GM12878 (cell line): ENCODE measurements at regions of chr2 and their contacts with region 1.

Region 1: DNA sequence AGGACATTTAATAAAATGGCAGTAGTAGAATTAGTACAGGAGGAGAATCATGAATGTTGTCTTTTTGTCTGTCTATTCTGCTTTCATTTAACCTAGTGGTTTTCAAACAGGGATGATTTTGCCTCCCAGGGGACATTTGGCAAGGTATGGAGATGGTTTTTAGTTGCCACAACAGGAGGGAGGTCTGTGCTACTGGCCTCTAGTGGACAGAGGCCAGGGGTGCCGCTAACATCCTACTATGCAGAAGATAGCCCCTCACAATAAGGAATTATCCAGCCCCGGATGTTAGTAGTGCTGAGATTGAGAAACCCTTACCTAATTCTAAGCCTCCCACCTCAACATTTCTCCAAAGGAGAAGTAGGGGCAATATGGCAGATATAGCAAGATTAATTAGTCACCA is 18.3 kb downstream of the FASTKD2 start:
- DNase-seq: no peak
- ATAC-seq: peak; percentile 74
- H3K4me3 ChIP-seq: no peak overlapping the region
- H3K27ac ChIP-seq: no peak overlapping the region
- H3K4me1 ChIP-seq: no peaks in the 10 kb centered on the region
- H3K27me3 ChIP-seq: no peaks in the 10 kb centered on the region
- CTCF ChIP-seq: peak; percentile 12 to 47 (median 37); a peak in 3 of 6 replicates
- EP300 ChIP-seq: no peak
- POLR2A ChIP-seq: no peak
- RAD21 ChIP-seq: no peak

Region 2: GRCh38 chr2:206693399-206694137 is 90.2 kb before region 1 on chr2:
- CTCF ChIA-PET with region 1: interaction called, 16 read pairs
- POLR2A ChIA-PET with region 1: no interaction called
- RAD21 ChIA-PET with region 1: interaction called, 6 read pairs
- SMC1A ChIA-PET with region 1: interaction called, 9 read pairs
- in situ Hi-C with region 1: loop called (anchors 10 kb)
- intact Hi-C with region 1: loop called (anchors 1 kb)
- DNase-seq: peak; percentile 24
- ATAC-seq: peak; percentile 84
- H3K4me3 ChIP-seq: no peak overlapping the region
- H3K27ac ChIP-seq: no peak overlapping the region
- H3K4me1 ChIP-seq: no peaks in the 10 kb centered on the region
- H3K27me3 ChIP-seq: no peaks in the 10 kb centered on the region
- CTCF ChIP-seq: peak; percentile 41 to 77 (median 61); a peak in 5 of 6 replicates
- EP300 ChIP-seq: no peak
- POLR2A ChIP-seq: no peak
- RAD21 ChIP-seq: peak; percentile 94

Region 3: GRCh38 chr2:206765242-206766056 is 18.3 kb before region 1 on chr2 and contains the starts of genes FASTKD2 and MDH1B:
- CTCF ChIA-PET with region 1: interaction called, 10 read pairs
- POLR2A ChIA-PET with region 1: no interaction called
- RAD21 ChIA-PET with region 1: interaction called, 5 read pairs
- SMC1A ChIA-PET with region 1: interaction called, 7 read pairs
- in situ Hi-C with region 1: no loop called
- intact Hi-C with region 1: no loop called
- DNase-seq: peak; percentile 92
- ATAC-seq: peak; percentile 93
- H3K4me3 ChIP-seq: peak within 1 kb of the TSS; percentile 97
- H3K27ac ChIP-seq: peak within 1 kb of the TSS; percentile 92
- H3K4me1 ChIP-seq: peaks cover 2% of the 10 kb centered on the region; the same call in 1 of the 2 replicates
- H3K27me3 ChIP-seq: no peaks in the 10 kb centered on the region
- CTCF ChIP-seq: no peak
- EP300 ChIP-seq: no peak
- POLR2A ChIP-seq: peak; percentile 93
- RAD21 ChIP-seq: no peak
- polyA plus RNA-seq, gene FASTKD2: 58.7 to 115 TPM
- polyA plus RNA-seq, gene MDH1B: 0.97 to 1.3 TPM